K562 (cell line): ENCODE measurements at regions of chr14 and their contacts with region 1.

Region 1: GRCh38 chr14:75315144-75315543 is 36.5 kb downstream of the FOS start:
- DNase-seq: no peak
- ATAC-seq: no peak
- H3K4me3 ChIP-seq: no peak overlapping the region
- H3K27ac ChIP-seq: no peak overlapping the region
- H3K4me1 ChIP-seq: peaks cover 0 to 3% of the 10 kb centered on the region in 2 experiments; a peak in 4 of 5 replicates
- H3K27me3 ChIP-seq: peaks cover 2 to 18% of the 10 kb centered on the region in 2 experiments; a peak in 3 of 5 replicates
- CTCF ChIP-seq: no peak
- EP300 ChIP-seq: no peak
- POLR2A ChIP-seq: no peak
- RAD21 ChIP-seq: no peak

Region 2: DNA sequence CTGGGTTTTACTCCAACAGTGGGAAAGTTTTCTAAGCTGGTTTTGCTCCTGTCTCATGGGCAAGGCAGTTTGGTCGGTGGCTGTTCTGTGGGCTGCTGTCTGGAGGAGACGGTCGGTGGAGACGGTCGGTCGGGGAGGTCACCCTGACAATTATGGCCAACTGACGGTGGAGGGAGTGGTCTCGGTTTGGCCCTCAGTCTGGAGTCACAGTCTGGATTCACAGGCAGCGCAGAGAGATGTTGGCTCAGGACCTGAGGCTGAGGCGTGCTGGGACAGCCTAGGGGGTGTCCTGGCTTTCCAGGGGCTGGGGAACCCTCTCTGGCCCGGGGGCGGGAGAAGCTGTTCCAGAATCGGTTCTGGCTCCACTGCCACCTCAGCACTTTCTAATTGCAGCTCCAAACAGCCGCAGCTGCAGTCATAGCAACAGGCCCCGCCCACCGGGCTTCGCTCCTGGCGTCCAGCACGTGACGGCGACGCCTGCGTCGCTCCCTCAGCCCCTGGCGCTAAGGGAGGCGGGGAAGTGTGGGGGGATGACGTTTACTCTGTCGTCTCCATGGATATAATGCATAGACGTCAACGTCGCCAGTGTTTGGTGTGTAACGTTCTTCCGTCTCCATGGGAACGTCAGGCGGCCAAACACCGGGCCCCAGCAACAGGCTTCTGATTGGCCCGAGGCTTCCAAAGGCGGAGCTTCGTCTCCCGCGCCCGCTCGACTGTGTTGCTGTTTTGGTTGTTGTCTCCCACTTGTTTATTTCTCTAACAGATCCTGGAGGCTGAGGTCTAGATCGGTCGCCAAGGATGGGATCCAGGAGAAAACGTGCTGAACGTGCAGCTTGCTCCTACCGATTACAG is 56.3 kb before region 1 on chr14:
- CTCF ChIA-PET with region 1: no interaction called
- POLR2A ChIA-PET with region 1: no interaction called
- in situ Hi-C with region 1: no loop called
- intact Hi-C with region 1: no loop called
- DNase-seq: peak; percentile 93 to 98 (median 94)
- ATAC-seq: peak; percentile 97
- H3K4me3 ChIP-seq: peak overlapping the region; percentile 37
- H3K27ac ChIP-seq: peak overlapping the region; percentile 94
- H3K4me1 ChIP-seq: peaks cover 6 to 22% of the 10 kb centered on the region in 2 experiments
- H3K27me3 ChIP-seq: no peaks in the 10 kb centered on the region
- CTCF ChIP-seq: no peak
- EP300 ChIP-seq: 0 out of 2 replicates have a peak, but pooled peaks have one; percentile 27
- POLR2A ChIP-seq: peak; percentile 45; the same call in 1 of the 2 replicates
- RAD21 ChIP-seq: no peak; a peak in 1 of 4 replicates

Region 3: GRCh38 chr14:75493580-75494130 is 178.5 kb after region 1 on chr14:
- CTCF ChIA-PET with region 1: interaction called, 3 read pairs
- POLR2A ChIA-PET with region 1: interaction called, 3 read pairs
- in situ Hi-C with region 1: loop called (anchors 5 kb)
- intact Hi-C with region 1: no loop called
- DNase-seq: no peak
- ATAC-seq: no peak
- H3K4me3 ChIP-seq: no peak overlapping the region
- H3K27ac ChIP-seq: no peak overlapping the region
- H3K4me1 ChIP-seq: peaks cover 0 to 7% of the 10 kb centered on the region in 2 experiments; a peak in 3 of 5 replicates
- H3K27me3 ChIP-seq: no peaks in the 10 kb centered on the region
- CTCF ChIP-seq: no peak
- EP300 ChIP-seq: no peak
- POLR2A ChIP-seq: no peak
- RAD21 ChIP-seq: no peak

Region 4: DNA sequence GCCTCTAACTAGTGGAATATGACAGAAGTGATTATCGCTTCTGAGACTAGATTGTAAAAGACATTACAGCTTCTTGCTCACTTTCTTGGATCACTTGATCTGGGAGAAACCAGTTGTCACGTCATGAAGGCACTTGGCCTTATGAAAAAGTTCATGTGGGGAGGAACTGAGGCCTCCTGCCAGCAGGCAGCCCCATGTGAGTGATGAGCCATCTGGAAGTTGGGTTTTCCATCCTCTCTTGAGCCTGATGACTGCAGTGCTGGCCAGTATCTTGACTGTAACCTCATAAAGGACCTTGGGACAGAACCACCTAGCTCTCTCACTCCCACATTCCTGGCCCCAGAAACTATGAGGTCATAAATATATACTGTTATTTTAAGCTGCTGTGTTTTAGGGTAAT is 373.9 kb after region 1 on chr14:
- CTCF ChIA-PET with region 1: no interaction called
- POLR2A ChIA-PET with region 1: no interaction called
- in situ Hi-C with region 1: no loop called
- intact Hi-C with region 1: no loop called
- DNase-seq: no peak
- ATAC-seq: no peak
- H3K4me3 ChIP-seq: no peak overlapping the region
- H3K27ac ChIP-seq: no peak overlapping the region
- H3K4me1 ChIP-seq: no peaks in the 10 kb centered on the region
- H3K27me3 ChIP-seq: no peaks in the 10 kb centered on the region
- CTCF ChIP-seq: no peak
- EP300 ChIP-seq: no peak
- POLR2A ChIP-seq: no peak
- RAD21 ChIP-seq: no peak